ENCODE measurements at regions of chr17 and their contacts with region 1.

Region 1: DNA sequence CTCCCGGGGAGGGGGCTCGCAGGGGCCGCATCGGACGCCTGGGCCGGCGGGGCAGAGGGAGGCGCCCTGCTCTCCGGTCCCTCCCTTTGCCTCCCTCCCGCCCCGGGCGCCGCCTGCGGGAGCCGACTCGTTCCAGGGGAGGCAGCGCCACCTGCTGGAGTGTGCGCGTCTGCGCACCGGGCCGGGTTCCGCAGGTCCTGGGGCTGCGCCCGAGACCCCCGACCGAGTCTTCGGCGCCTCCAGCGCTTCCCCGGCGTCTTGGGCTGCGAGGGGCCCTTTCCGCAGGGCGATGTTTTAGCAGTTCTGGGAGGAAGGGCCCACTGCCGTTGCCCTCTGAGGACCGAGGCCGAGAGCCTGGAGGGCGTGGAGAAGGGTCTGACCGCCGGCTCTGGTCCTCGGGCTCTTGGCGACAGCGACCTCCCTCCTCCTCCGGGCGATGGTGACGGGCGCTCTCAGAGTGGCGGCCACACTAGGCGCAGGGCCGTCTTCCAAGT is 106.3 kb downstream of the SEC14L1 start:
- DNase-seq: peak; percentile 98
- H3K4me3 ChIP-seq: peak overlapping the region; percentile 47 to 80
- H3K27ac ChIP-seq: no peak overlapping the region; a peak in 1 of 4 replicates
- H3K4me1 ChIP-seq: peaks cover 0 to 6% of the 10 kb centered on the region in 2 experiments; a peak in 1 of 4 replicates
- H3K27me3 ChIP-seq: no peaks in the 10 kb centered on the region
- CTCF ChIP-seq: peak; percentile 98
- EP300 ChIP-seq: no peak
- RAD21 ChIP-seq: peak; percentile 86

Region 2: GRCh38 chr17:77083531-77083930 is 163.6 kb before region 1 on chr17:
- CTCF ChIA-PET with region 1: interaction called, 99 read pairs
- POLR2A ChIA-PET with region 1: interaction called, 6 read pairs
- DNase-seq: no peak
- H3K4me3 ChIP-seq: no peak overlapping the region
- H3K27ac ChIP-seq: no peak overlapping the region; a peak in 1 of 4 replicates
- H3K4me1 ChIP-seq: peaks cover 5 to 16% of the 10 kb centered on the region in 2 experiments; a peak in 1 of 4 replicates
- H3K27me3 ChIP-seq: no peaks in the 10 kb centered on the region
- CTCF ChIP-seq: no peak
- EP300 ChIP-seq: no peak
- RAD21 ChIP-seq: no peak

Region 3: DNA sequence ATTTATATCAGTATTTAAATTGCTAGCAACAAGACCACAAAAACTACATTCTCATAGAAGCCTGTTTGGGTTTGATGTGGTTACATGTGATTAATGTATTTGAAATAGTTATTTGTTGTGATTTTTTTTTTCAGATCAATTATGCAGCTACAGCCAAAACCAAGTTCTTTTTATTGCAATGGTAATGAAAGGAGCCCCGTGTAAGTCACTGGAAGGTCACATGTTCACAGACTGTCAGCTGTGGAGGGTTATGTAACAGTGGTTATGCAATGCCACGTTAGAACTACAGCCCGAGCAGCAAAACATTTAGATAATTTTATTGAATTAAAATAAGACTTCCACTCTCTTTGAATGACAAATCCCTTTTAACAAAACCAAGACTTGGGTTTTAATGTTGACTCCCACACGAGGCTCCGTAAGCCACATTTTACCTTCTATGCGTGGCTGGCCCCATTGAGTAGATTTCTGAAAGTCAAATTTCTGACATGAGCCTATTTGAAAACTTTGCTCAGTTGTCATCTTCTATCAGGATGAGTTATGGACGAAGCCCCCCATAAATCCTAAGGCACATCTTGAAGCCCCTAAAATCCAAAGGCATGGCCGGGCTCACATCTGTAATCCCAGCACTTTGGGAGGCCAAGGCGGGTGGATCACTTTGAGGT is 148.1 kb before region 1 on chr17:
- CTCF ChIA-PET with region 1: interaction called, 16 read pairs
- POLR2A ChIA-PET with region 1: no interaction called
- DNase-seq: no peak
- H3K4me3 ChIP-seq: no peak overlapping the region
- H3K27ac ChIP-seq: no peak overlapping the region
- H3K4me1 ChIP-seq: no peaks in the 10 kb centered on the region
- H3K27me3 ChIP-seq: no peaks in the 10 kb centered on the region
- CTCF ChIP-seq: no peak
- EP300 ChIP-seq: no peak
- RAD21 ChIP-seq: no peak

Region 4: GRCh38 chr17:77214743-77215142 is 32.4 kb before region 1 on chr17:
- CTCF ChIA-PET with region 1: interaction called, 20 read pairs
- POLR2A ChIA-PET with region 1: no interaction called
- DNase-seq: peak; percentile 77
- H3K4me3 ChIP-seq: no peak overlapping the region
- H3K27ac ChIP-seq: no peak overlapping the region
- H3K4me1 ChIP-seq: no peaks in the 10 kb centered on the region
- H3K27me3 ChIP-seq: no peaks in the 10 kb centered on the region
- CTCF ChIP-seq: peak; percentile 65
- EP300 ChIP-seq: no peak
- RAD21 ChIP-seq: peak; percentile 66

Region 5: DNA sequence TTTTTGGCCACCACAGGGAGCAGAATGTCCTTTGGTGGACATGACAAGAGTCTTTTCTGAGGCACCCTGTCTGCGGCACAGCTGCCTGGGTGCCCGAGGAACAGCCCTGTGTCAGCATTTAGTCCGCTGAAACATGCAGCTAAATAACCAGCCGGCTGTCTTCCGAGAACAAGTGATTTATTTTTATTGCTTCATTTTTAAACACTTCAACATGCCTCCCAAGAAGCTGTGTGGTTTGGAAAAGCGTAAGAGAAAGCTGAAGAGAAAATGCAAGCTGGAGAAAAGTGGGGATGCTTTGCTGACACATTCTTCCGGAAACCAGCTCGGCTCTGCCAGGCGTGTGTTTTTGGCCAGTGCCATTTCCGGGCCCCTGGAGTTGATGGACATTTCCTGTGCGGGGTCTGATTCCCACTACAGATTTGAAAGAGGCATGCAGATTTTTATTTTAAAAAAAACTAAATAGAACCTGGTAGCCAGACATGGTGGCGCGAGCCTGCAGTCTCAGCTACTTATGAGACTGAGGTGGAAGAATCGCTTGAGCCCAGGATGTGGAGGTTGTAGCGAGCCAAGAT is 11.6 kb before region 1 on chr17:
- CTCF ChIA-PET with region 1: interaction called, 19 read pairs
- POLR2A ChIA-PET with region 1: no interaction called
- DNase-seq: peak; percentile 71
- H3K4me3 ChIP-seq: peak overlapping the region; percentile 7 to 42; a peak in 3 of 4 replicates
- H3K27ac ChIP-seq: peak overlapping the region; percentile 45 to 81
- H3K4me1 ChIP-seq: peaks cover 3 to 15% of the 10 kb centered on the region in 2 experiments; a peak in 2 of 4 replicates
- H3K27me3 ChIP-seq: no peaks in the 10 kb centered on the region
- CTCF ChIP-seq: no peak
- EP300 ChIP-seq: peak in 1 of 2 experiments; percentile 76; a peak in 2 of 4 replicates
- RAD21 ChIP-seq: no peak

Region 6: GRCh38 chr17:77359236-77359635 is 112.1 kb after region 1 on chr17:
- CTCF ChIA-PET with region 1: no interaction called
- POLR2A ChIA-PET with region 1: no interaction called
- DNase-seq: no peak
- H3K4me3 ChIP-seq: no peak overlapping the region
- H3K27ac ChIP-seq: no peak overlapping the region; a peak in 1 of 4 replicates
- H3K4me1 ChIP-seq: peaks cover 18 to 53% of the 10 kb centered on the region in 2 experiments
- H3K27me3 ChIP-seq: no peaks in the 10 kb centered on the region
- CTCF ChIP-seq: no peak
- EP300 ChIP-seq: no peak
- RAD21 ChIP-seq: no peak

Region 7: GRCh38 chr17:77409282-77410161 is 162.4 kb after region 1 on chr17:
- CTCF ChIA-PET with region 1: no interaction called
- POLR2A ChIA-PET with region 1: no interaction called
- DNase-seq: no peak
- H3K4me3 ChIP-seq: no peak overlapping the region
- H3K27ac ChIP-seq: no peak overlapping the region
- H3K4me1 ChIP-seq: peaks cover 14 to 37% of the 10 kb centered on the region in 2 experiments; a peak in 3 of 4 replicates
- H3K27me3 ChIP-seq: no peaks in the 10 kb centered on the region
- CTCF ChIP-seq: no peak
- EP300 ChIP-seq: no peak
- RAD21 ChIP-seq: no peak

Measured in SK-N-SH (cell line).